Panc1 (cell line): ENCODE measurements at regions of chr7 and their contacts with region 1.

Region 1: DNA sequence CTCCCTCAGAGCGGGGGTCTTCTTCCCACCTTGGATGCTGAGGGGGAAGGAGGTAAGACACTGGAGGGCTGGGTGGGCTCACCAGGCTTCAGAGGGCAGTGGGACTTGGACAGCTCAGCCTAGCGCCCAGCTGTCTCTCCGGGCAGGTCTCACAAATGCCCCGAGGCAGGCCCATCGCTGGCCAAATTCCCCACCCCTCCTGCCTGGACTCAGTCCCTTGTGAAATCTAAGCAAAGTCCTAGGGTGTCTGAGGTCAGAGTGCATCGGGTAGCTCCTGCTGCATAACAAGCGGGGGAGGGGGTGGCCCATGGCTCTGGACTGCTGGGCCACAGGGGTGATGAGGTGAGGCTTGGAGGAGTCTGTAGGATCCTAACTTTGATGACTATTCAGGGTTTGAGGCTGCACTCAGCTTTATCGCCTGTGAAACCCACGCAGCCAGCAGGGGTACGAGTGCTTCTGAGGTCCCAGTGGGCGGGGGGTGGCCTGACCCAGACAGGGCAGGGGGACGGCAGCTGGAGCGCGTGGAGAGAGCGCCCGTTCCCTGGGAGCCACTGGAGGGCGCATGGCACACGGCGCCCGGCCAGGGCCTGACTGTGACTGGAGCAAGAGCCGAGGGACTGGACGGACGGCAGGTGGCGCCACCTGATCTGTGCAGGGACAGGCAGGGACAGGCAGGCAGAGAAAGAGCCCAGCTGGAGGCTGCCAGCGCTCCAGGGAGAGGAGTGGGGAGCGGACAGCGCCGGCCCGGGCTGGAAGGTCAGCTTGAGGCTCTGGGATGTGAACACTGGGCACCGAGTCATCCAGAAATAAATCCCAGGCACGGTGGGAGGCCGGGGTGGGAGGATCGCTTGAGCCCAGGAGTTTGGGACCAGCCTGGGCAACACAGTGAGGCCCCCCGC is 10.0 kb downstream of the CYP2W1 start:
- DNase-seq: peak; percentile 83
- ATAC-seq: peak; percentile 94
- H3K4me3 ChIP-seq: no peak overlapping the region
- H3K27ac ChIP-seq: 0 out of 2 replicates have a peak overlapping the region, but pooled peaks have one; percentile 31
- H3K4me1 ChIP-seq: peaks cover 33% of the 10 kb centered on the region
- H3K27me3 ChIP-seq: no peaks in the 10 kb centered on the region
- CTCF ChIP-seq: peak; percentile 100

Region 2: DNA sequence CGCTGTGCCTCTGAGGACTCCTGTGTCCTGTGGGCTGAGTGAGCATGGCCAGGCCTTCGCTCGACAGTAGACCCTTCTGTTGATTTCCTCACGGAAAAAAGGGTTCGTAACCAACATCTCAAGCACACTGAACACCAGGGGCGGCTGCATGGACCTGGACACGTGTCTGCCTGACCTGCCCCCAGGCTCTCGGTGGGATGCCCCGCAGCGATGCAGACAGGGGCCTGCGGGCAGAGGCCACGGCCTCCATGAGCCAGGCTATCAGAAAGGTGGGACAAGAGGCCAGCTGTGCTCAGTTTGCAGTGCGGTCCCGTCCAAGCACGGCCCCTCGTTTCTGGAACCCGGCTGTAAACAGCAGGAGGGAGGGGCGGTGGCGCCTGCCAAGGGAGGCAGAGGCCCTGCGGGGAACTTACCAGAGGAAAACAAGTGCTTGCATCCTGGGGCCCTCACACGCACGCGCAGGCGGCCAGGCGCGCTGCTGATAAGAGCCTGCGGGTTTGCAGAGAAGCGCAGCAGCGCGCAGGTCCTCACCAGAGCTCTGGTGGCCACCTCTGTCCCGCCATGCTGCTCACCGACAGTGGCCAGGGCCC is 62.0 kb after region 1 on chr7:
- CTCF ChIA-PET with region 1: no interaction called
- POLR2A ChIA-PET with region 1: no interaction called
- in situ Hi-C with region 1: no loop called
- intact Hi-C with region 1: no loop called
- DNase-seq: no peak
- ATAC-seq: no peak
- H3K4me3 ChIP-seq: no peak overlapping the region
- H3K27ac ChIP-seq: no peak overlapping the region
- H3K4me1 ChIP-seq: peaks cover under 1% of the 10 kb centered on the region; the same call in 1 of the 2 replicates
- H3K27me3 ChIP-seq: no peaks in the 10 kb centered on the region
- CTCF ChIP-seq: no peak

Region 3: GRCh38 chr7:1065263-1066260 is 72.6 kb after region 1 on chr7:
- CTCF ChIA-PET with region 1: interaction called, 49 read pairs
- POLR2A ChIA-PET with region 1: no interaction called
- in situ Hi-C with region 1: no loop called
- intact Hi-C with region 1: loop called (anchors 2 kb)
- DNase-seq: no peak
- ATAC-seq: peak; percentile 97
- H3K4me3 ChIP-seq: no peak overlapping the region
- H3K27ac ChIP-seq: no peak overlapping the region
- H3K4me1 ChIP-seq: peaks cover 10% of the 10 kb centered on the region
- H3K27me3 ChIP-seq: no peaks in the 10 kb centered on the region
- CTCF ChIP-seq: peak; percentile 99

Region 4: DNA sequence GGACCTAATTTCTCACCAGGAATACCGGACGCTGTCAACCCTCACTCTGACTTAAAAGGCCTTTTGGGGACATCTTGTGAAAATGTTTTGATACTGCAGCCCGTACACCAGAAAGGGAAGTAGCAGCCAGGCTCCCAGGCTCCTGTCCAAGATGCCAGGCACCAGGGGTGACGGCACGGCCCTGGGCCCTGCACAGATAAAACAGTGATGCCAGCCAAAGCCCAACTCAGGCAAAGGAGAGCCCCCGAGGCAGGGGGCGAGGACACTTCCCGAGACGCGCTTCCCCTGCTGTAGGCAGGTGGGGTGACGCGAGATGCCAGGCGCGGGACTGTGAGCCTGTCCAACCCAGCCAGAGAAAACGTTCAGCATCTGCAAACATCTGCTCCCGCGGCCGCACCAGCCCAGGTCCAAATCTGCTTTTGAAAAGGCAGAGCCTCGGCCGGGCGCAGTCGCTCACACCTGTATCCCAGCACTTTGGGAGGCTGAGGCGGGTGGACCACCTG is 151.4 kb after region 1 on chr7:
- CTCF ChIA-PET with region 1: interaction called, 4 read pairs
- POLR2A ChIA-PET with region 1: interaction called, 6 read pairs
- in situ Hi-C with region 1: no loop called
- intact Hi-C with region 1: loop called (anchors 5 kb)
- DNase-seq: no peak
- ATAC-seq: peak; percentile 89
- H3K4me3 ChIP-seq: no peak overlapping the region
- H3K27ac ChIP-seq: no peak overlapping the region
- H3K4me1 ChIP-seq: no peaks in the 10 kb centered on the region; the same call in 1 of the 2 replicates
- H3K27me3 ChIP-seq: no peaks in the 10 kb centered on the region
- CTCF ChIP-seq: no peak; the same call in 1 of the 2 replicates

Region 5: DNA sequence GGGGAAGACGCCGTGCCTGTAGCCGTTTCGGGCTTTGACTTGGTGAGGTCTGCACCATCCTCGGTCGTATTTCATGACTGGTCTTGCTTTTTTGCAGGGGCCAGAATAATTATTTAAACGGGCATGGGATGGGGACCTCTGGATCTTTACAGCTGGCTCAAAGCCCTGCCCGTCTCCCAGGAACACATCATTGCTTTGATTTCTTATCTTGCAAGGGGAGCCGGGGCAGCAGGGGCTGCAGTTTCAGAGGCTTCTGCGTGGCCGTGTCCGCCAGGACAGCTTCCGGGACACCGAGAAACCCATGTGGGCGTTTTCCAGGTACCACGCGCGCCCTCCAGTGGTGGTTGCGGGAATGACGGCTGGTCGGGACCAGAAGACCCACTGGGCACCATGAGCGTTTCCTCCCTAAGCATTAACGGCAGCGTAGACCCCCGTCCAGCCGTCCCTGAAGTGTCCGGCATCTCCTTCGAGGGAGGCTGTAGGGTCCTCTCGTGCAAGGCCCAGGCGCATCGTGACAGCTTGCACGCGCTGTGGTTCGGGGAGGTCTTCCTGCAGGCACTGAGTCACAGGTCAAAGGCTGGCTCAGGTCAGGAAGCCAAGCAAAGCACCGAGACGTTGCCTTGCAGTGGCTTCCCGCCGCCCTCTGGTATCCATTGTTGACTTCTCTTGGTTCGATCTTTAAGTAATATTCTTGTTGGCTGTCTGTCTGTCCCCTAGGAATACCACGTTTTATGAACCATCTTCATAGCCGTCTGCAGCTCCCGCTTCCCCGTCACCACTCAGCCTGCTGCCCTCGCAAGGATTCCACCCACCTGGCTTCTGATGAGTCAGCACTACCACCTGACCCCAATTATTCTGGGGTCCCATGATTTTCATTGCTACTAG is 183.3 kb after region 1 on chr7:
- CTCF ChIA-PET with region 1: interaction called, 16 read pairs
- POLR2A ChIA-PET with region 1: no interaction called
- in situ Hi-C with region 1: no loop called
- intact Hi-C with region 1: no loop called
- DNase-seq: peak; percentile 72
- ATAC-seq: peak; percentile 91
- H3K4me3 ChIP-seq: peak overlapping the region; percentile 24 to 51
- H3K27ac ChIP-seq: peak overlapping the region; percentile 76
- H3K4me1 ChIP-seq: peaks cover 12% of the 10 kb centered on the region
- H3K27me3 ChIP-seq: no peaks in the 10 kb centered on the region
- CTCF ChIP-seq: peak; percentile 98